ENCODE measurements at regions of chr5 and their contacts with region 1.

Region 1: GRCh38 chr5:175448276-175448675 is 4.3 kb upstream of the DRD1 start:
- DNase-seq: no peak
- H3K4me3 Mint-ChIP-seq: no peak overlapping the region
- H3K27ac Mint-ChIP-seq: no peak overlapping the region
- H3K4me1 Mint-ChIP-seq: peaks cover 5% of the 10 kb centered on the region
- H3K27me3 Mint-ChIP-seq: peaks cover 71% of the 10 kb centered on the region

Region 2: GRCh38 chr5:175464074-175464941 is 16.0 kb after region 1 on chr5:
- CTCF ChIA-PET with region 1: interaction called, 12 read pairs
- POLR2A ChIA-PET with region 1: no interaction called
- DNase-seq: peak; percentile 77
- H3K4me3 Mint-ChIP-seq: no peak overlapping the region
- H3K27ac Mint-ChIP-seq: no peak overlapping the region
- H3K4me1 Mint-ChIP-seq: peaks cover 7% of the 10 kb centered on the region
- H3K27me3 Mint-ChIP-seq: peaks cover 4% of the 10 kb centered on the region